Naive thymus-derived CD4-positive, alpha-beta T cell (primary cell): ENCODE measurements at regions of chr3 and their contacts with region 1.

Region 1: GRCh38 chr3:19030522-19030839 is 117.8 kb upstream of the KCNH8 start:
- DNase-seq: peak in 5 of 9 donors; percentile 5 to 36 (median 18)
- ATAC-seq: peak; percentile 22
- H3K4me3 ChIP-seq: no peak overlapping the region
- H3K4me3 Mint-ChIP-seq: no peak overlapping the region
- H3K27ac ChIP-seq: no peak overlapping the region
- H3K27ac Mint-ChIP-seq: no peak overlapping the region
- H3K4me1 ChIP-seq: no peaks in the 10 kb centered on the region
- H3K4me1 Mint-ChIP-seq: peaks cover 0 to 7% (median 0%) of the 10 kb centered on the region in 7 donors
- H3K27me3 ChIP-seq: no peaks in the 10 kb centered on the region
- H3K27me3 Mint-ChIP-seq: peaks cover 12 to 34% (median 20%) of the 10 kb centered on the region in 5 donors

Region 2: GRCh38 chr3:17645072-17645698 is 1385.3 kb before region 1 on chr3:
- CTCF ChIA-PET with region 1: no interaction called
- POLR2A ChIA-PET with region 1: no interaction called
- intact Hi-C with region 1: loop called in 1 of 2 experiments (anchors 2 kb)
- DNase-seq: peak in 6 of 9 donors; percentile 1 to 19 (median 12)
- ATAC-seq: no peak
- H3K4me3 ChIP-seq: no peak overlapping the region
- H3K4me3 Mint-ChIP-seq: no peak overlapping the region
- H3K27ac ChIP-seq: no peak overlapping the region
- H3K27ac Mint-ChIP-seq: no peak overlapping the region
- H3K4me1 ChIP-seq: no peaks in the 10 kb centered on the region
- H3K4me1 Mint-ChIP-seq: peaks cover 0 to 7% (median 3%) of the 10 kb centered on the region in 7 donors
- H3K27me3 ChIP-seq: no peaks in the 10 kb centered on the region
- H3K27me3 Mint-ChIP-seq: no peaks in the 10 kb centered on the region

Region 3: GRCh38 chr3:19229086-19229485 is 198.6 kb after region 1 on chr3:
- CTCF ChIA-PET with region 1: no interaction called
- POLR2A ChIA-PET with region 1: no interaction called
- intact Hi-C with region 1: no loop called
- DNase-seq: no peak
- ATAC-seq: no peak
- H3K4me3 ChIP-seq: no peak overlapping the region
- H3K4me3 Mint-ChIP-seq: no peak overlapping the region
- H3K27ac ChIP-seq: no peak overlapping the region
- H3K27ac Mint-ChIP-seq: no peak overlapping the region
- H3K4me1 ChIP-seq: no peaks in the 10 kb centered on the region
- H3K4me1 Mint-ChIP-seq: peaks cover 0 to 5% (median 0%) of the 10 kb centered on the region in 7 donors
- H3K27me3 ChIP-seq: no peaks in the 10 kb centered on the region
- H3K27me3 Mint-ChIP-seq: peaks cover 0 to 11% (median 8%) of the 10 kb centered on the region in 5 donors